OCI-LY7 (cell line): ENCODE measurements at regions of chr6 and their contacts with region 1.

Region 1: DNA sequence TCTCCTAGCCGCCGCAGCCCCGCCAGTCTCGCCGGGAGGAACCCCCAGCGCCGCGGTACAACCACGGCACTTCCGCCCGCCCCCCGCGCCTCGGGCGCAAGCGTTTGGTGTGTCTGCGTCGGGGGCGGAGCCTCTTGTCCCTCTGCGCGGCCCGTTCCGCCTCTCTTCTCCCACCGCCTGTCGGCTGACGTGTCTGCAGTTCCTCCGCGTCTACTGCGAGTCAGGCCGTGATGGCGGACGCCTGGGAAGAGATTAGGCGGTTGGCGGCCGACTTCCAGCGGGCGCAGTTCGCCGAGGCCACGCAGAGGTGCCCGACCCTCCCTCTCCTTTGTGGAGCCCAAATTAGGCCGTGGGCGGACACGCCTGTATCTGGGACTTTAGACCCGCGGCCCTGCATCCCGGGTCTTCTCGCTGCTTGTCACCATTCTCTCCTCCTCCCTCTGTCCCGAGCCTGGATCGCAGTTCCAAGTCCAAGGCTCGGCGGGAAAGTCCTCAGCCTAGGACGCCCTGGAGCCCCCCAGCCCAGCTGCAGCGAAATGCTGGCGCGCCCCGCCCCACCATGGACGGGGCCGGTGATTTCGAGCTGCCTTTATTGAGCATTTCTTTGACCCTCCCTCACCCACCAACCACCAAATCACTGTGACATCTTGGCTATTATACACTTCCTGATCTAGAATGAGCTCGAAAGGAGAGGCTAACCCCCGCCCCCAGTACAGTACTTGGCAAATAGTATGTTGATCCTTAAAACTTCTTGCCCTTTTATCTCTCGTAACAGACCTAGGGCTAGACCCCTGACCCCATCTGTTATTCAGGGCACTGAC is at the start of gene UFL1:
- DNase-seq: peak; percentile 95
- H3K4me3 ChIP-seq: peak within 1 kb of the TSS; percentile 90
- H3K27ac ChIP-seq: peak within 1 kb of the TSS; percentile 84
- H3K4me1 ChIP-seq: peaks cover 24% of the 10 kb centered on the region
- CTCF ChIP-seq: no peak
- total RNA-seq, gene UFL1: 14.1 and 15.5 TPM in 2 replicates

Region 2: GRCh38 chr6:95577304-95578105 is 944.3 kb before region 1 on chr6 and contains the start of gene MANEA:
- CTCF ChIA-PET with region 1: no interaction called
- POLR2A ChIA-PET with region 1: no interaction called
- intact Hi-C with region 1: loop called (anchors 5 kb)
- DNase-seq: peak; percentile 86
- H3K4me3 ChIP-seq: peak within 1 kb of the TSS; percentile 84
- H3K27ac ChIP-seq: peak within 1 kb of the TSS; percentile 93
- H3K4me1 ChIP-seq: peaks cover 31% of the 10 kb centered on the region
- CTCF ChIP-seq: no peak
- total RNA-seq, gene MANEA: 7.6 and 9.1 TPM in 2 replicates

Region 3: GRCh38 chr6:96532399-96532798 is 10.5 kb after region 1 on chr6:
- CTCF ChIA-PET with region 1: no interaction called
- POLR2A ChIA-PET with region 1: interaction called, 14 read pairs
- intact Hi-C with region 1: no loop called
- DNase-seq: peak; percentile 30
- H3K4me3 ChIP-seq: no peak overlapping the region
- H3K27ac ChIP-seq: no peak overlapping the region
- H3K4me1 ChIP-seq: peaks cover 9% of the 10 kb centered on the region
- CTCF ChIP-seq: no peak

Region 4: DNA sequence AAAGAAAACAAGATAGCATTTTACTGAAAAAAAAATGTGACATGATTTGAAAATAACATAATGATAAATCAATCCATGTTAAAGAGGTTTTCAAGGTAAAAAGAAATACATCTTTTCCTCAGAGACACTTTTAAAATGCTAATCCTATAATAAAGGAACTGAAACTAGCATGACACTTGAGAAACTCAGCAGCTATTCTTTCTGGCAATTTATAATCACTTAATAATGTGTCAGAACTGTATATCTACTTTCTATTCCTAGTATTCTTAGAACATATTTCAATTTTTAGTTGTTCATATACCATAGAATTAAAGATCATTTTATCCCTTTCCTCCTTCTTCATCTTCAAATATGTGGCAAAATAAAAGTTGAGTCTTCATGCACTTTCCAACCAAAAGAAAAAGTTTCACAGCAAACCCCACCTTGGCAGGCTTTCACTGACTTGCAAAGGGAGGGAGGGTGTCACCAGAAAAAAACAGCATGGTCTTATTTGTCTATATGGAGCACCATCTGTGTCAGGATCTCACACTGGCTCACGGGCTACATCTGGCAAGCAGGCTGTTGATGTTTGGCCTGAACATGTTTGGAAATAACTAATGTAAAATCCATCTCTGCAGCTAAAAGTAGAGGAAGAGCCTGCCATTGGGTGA is 89.6 kb after region 1 on chr6:
- CTCF ChIA-PET with region 1: interaction called, 5 read pairs
- POLR2A ChIA-PET with region 1: interaction called, 10 read pairs
- intact Hi-C with region 1: loop called (anchors 2 kb)
- DNase-seq: peak; percentile 66
- H3K4me3 ChIP-seq: peak overlapping the region; percentile 14
- H3K27ac ChIP-seq: peak overlapping the region; percentile 76
- H3K4me1 ChIP-seq: peaks cover 63% of the 10 kb centered on the region
- CTCF ChIP-seq: no peak

Region 5: GRCh38 chr6:96837081-96837971 is 315.5 kb after region 1 on chr6 and contains the start of gene GPR63:
- CTCF ChIA-PET with region 1: no interaction called
- POLR2A ChIA-PET with region 1: no interaction called
- intact Hi-C with region 1: loop called (anchors 5 kb)
- DNase-seq: peak; percentile 64
- H3K4me3 ChIP-seq: peak within 1 kb of the TSS; percentile 72
- H3K27ac ChIP-seq: no peak within 1 kb of the TSS
- H3K4me1 ChIP-seq: peaks cover 6% of the 10 kb centered on the region
- CTCF ChIP-seq: no peak
- total RNA-seq, gene GPR63: 0.57 and 1.0 TPM in 2 replicates

Region 6: GRCh38 chr6:97053643-97054411 is 532.0 kb after region 1 on chr6:
- CTCF ChIA-PET with region 1: no interaction called
- POLR2A ChIA-PET with region 1: interaction called, 5 read pairs
- intact Hi-C with region 1: loop called (anchors 1 kb)
- DNase-seq: peak; percentile 23
- H3K4me3 ChIP-seq: no peak overlapping the region
- H3K27ac ChIP-seq: no peak overlapping the region
- H3K4me1 ChIP-seq: peaks cover 52% of the 10 kb centered on the region
- CTCF ChIP-seq: peak; percentile 95

Region 7: DNA sequence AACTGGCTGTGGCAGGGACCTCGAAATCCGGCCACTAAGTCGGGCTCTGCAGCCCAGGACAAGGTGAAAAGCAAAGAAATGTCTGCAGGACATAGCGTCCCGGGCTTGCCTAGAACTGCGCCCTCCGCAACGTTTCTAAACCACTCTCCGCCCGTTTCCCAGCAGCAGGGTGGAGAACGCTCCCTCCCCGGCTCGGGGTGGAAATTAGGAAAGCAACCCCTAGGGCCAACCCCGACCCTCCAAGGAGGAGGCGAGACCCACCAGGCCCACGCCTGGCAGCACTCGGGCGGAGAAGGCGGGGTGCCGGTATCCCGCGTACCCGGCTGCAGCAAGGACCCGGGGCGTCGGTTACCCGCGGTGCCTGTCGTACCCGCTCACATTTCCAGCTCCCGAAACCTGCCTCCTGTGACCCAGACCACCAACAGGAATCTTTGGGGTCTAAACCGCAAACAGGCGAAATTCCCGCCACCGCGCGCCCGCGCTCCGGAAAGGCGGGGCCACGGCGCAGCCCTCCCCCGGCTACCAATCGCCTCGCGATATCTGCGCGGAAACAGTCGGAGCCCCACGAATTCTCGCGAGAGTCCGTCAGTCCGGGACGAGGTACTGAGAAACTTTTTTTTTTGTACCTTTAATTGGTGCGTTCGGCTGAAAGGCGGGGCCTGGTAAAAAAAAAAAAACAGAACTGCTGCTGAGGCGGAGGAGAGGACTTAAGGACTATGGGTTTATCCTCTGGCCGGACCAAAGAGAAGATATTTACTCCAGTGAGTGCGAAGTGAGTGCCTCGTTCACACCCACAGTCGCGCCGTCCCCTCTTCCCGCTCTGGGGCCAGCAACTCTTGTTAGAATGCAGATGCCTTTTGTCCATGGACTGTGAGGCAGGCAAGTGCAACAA is 761.1 kb after region 1 on chr6 and contains the start of gene MMS22L:
- CTCF ChIA-PET with region 1: no interaction called
- POLR2A ChIA-PET with region 1: no interaction called
- intact Hi-C with region 1: loop called (anchors 10 kb)
- DNase-seq: peak; percentile 98
- H3K4me3 ChIP-seq: peak within 1 kb of the TSS; percentile 84
- H3K27ac ChIP-seq: peak within 1 kb of the TSS; percentile 58
- H3K4me1 ChIP-seq: peaks cover 16% of the 10 kb centered on the region
- CTCF ChIP-seq: no peak
- total RNA-seq, gene MMS22L: 44.3 and 50.2 TPM in 2 replicates